Activated T-helper 1 cell treated with anti-CD3 and anti-CD28 coated beads, Interleukin-12 subunit alpha, Interleukin-12 subunit beta, Interleukin-2, Interleukin-4 antibody, amounts not matched to agents 30 ng/mL and 10 ng/mL and 1 ng/mL, durations not matched to agents 14 hours and 24 hours and 36 hours (primary cell): ENCODE measurements at regions of chr4 and their contacts with region 1.

Region 1: DNA sequence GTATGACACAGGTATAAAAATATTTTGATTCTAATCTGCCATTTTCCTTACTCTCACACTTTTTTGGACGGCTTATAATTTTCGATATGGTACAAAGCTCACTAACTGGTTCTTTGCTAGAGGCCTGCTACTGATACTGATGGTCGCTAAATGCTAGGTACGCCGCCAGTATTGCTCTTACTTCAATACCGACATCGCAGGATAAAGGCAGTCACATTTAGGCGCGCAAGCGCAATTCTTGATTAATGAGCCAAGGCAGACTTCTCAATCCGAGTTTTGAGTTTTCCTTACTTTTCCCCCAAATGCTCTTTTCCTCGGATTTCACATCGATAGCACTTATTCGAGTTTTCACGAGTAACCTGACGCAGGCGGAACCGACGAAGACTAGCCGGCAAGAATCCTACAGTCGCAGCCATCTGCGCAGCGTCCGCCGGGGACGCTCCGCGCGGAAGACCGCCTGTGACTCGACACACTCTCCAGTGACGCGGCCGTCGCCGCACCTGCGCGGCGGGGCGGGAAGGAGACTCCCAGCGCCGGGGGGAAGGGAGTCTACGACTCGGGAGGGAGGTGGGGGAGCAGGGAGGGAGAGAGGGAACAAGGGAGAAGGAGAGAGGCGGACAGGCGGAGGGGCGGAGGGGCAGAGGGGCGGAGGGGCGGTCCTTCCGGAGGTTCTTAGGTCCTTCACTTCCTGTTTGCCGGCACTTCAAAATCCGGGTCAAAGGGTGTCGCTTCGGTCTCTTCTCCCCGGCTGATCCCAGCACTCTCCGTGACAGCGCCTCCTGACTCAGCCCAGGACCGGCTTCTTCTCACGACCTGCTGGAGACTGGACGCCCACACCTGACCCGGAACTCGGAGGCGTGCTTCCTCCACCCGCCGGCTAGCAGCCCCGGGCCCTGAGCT is at the start of gene USP38:
- DNase-seq: peak; percentile 80
- H3K4me3 Mint-ChIP-seq: peak within 1 kb of the TSS; percentile 92
- H3K27ac Mint-ChIP-seq: peak within 1 kb of the TSS; percentile 98
- H3K4me1 Mint-ChIP-seq: peaks cover 62% of the 10 kb centered on the region
- H3K27me3 Mint-ChIP-seq: no peaks in the 10 kb centered on the region
- total RNA-seq, gene USP38: 29.8 and 32.0 TPM in 2 replicates

Region 2: GRCh38 chr4:141636082-141636770 is 1548.2 kb before region 1 on chr4 and contains the start of gene IL15:
- intact Hi-C with region 1: loop called (anchors 10 kb)
- DNase-seq: peak; percentile 70
- H3K4me3 Mint-ChIP-seq: peak within 1 kb of the TSS; percentile 96
- H3K27ac Mint-ChIP-seq: peak within 1 kb of the TSS; percentile 81
- H3K4me1 Mint-ChIP-seq: peaks cover 25% of the 10 kb centered on the region
- H3K27me3 Mint-ChIP-seq: peaks cover 20% of the 10 kb centered on the region
- total RNA-seq, gene IL15: 0.67 and 1.8 TPM in 2 replicates

Region 3: DNA sequence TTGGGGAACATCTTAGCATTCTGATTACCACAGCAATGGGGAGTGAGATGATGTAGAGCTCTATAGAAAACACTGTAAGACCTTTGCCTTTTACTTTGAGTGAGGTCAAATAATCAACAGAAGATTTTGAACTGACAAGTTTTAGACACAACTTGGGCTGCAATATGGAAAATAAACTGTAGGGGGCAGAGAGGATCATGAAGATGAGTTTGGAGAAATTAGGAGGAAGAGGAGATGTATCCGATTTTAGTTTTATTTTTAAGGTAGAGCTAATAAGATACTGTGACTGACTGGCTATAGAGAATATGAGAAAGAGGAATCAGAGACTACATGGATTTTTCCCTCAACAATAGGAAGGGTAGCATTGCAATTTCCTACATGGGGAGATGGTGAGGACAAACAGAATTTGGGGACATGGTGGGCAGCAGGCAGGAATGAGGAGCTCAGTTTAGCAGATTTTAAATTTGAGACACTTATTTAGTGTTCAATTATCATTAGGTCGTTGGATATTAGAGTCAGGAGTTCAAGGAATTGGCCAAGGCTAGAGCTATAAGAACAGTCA is 901.5 kb before region 1 on chr4:
- intact Hi-C with region 1: loop called (anchors 10 kb)
- DNase-seq: no peak
- H3K4me3 Mint-ChIP-seq: no peak overlapping the region
- H3K27ac Mint-ChIP-seq: no peak overlapping the region
- H3K4me1 Mint-ChIP-seq: peaks cover 5% of the 10 kb centered on the region
- H3K27me3 Mint-ChIP-seq: no peaks in the 10 kb centered on the region

Region 4: DNA sequence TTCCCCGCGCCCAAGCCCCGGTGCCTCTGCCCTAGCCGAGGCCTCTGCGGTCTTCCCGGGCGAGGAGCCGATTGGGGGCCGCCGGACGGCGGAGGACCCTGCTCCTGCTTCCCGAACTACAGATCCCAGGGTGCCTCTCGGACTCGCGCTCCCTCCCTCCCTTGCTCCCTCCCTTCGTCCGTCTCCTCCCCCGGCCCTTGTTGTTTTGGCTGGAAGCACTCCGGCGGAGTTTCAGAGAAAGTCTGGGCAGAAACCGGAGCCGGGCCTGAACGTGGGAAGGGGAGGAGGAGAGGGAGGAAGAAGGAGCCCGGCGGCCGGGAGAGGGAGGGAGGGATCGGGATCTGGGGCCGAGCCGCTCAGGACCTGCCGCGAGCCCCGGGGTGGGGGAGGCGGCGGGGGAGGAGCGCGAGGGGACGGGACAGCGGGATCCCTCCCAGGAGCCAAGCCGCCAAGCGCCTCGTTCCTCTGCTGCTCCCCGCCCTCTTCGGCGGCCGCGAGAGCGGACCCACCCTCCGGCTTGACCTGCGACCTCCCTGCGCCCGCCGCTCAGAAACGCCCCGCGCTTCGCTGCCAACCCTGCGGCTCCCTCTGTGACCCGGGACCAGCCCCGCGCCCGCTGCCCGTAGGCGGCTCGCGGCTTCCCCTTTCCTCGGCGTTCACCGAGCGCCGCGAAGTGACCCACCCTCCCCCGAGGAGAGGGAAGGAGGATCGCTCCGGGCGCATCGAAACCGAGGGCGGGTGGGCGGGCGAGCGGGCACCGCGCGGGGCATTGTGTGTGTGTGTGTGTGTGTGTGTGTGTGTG is 151.7 kb after region 1 on chr4:
- intact Hi-C with region 1: loop called (anchors 2 kb)
- DNase-seq: peak; percentile 4
- H3K4me3 Mint-ChIP-seq: peak overlapping the region; percentile 89
- H3K27ac Mint-ChIP-seq: no peak overlapping the region
- H3K4me1 Mint-ChIP-seq: peaks cover 6% of the 10 kb centered on the region
- H3K27me3 Mint-ChIP-seq: peaks cover 56% of the 10 kb centered on the region

Region 5: GRCh38 chr4:143399113-143399949 is 214.9 kb after region 1 on chr4:
- intact Hi-C with region 1: loop called (anchors 5 kb)
- DNase-seq: no peak
- H3K4me3 Mint-ChIP-seq: no peak overlapping the region
- H3K27ac Mint-ChIP-seq: no peak overlapping the region
- H3K4me1 Mint-ChIP-seq: peaks cover 11% of the 10 kb centered on the region
- H3K27me3 Mint-ChIP-seq: peaks cover 17% of the 10 kb centered on the region

Region 6: GRCh38 chr4:145097821-145098674 is 1913.6 kb after region 1 on chr4 and contains the starts of genes ABCE1 and ANAPC10:
- intact Hi-C with region 1: loop called (anchors 5 kb)
- DNase-seq: peak; percentile 94
- H3K4me3 Mint-ChIP-seq: peak within 1 kb of the TSS; percentile 92
- H3K27ac Mint-ChIP-seq: peak within 1 kb of the TSS; percentile 100
- H3K4me1 Mint-ChIP-seq: peaks cover 27% of the 10 kb centered on the region
- H3K27me3 Mint-ChIP-seq: no peaks in the 10 kb centered on the region
- total RNA-seq, gene ABCE1: 155 and 176 TPM in 2 replicates
- total RNA-seq, gene ANAPC10: 25.4 and 32.1 TPM in 2 replicates